B cell (primary cell): ENCODE measurements at regions of chr14 and their contacts with region 1.

Region 1: GRCh38 chr14:24080888-24081738 is 9.8 kb downstream of the CPNE6 start:
- DNase-seq: peak; percentile 82
- ATAC-seq: peak; percentile 93
- H3K4me3 ChIP-seq: peak overlapping the region; percentile 48 to 78 (median 64)
- H3K4me3 Mint-ChIP-seq: peak overlapping the region; percentile 86
- H3K27ac ChIP-seq: peak overlapping the region; percentile 75 to 77
- H3K27ac Mint-ChIP-seq: peak overlapping the region; percentile 91
- H3K4me1 ChIP-seq: peaks cover 19 to 24% of the 10 kb centered on the region in 2 donors
- H3K4me1 Mint-ChIP-seq: peaks cover 30% of the 10 kb centered on the region
- H3K27me3 ChIP-seq: no peaks in the 10 kb centered on the region
- H3K27me3 Mint-ChIP-seq: no peaks in the 10 kb centered on the region
- CTCF ChIP-seq: no peak

Region 2: GRCh38 chr14:24051789-24052655 is 29.1 kb before region 1 on chr14 and contains the start of gene CARMIL3:
- CTCF ChIA-PET with region 1: interaction called, 37 read pairs
- POLR2A ChIA-PET with region 1: interaction called, 9 read pairs
- intact Hi-C with region 1: loop called (anchors 1 kb)
- DNase-seq: peak; percentile 79
- ATAC-seq: peak; percentile 87
- H3K4me3 ChIP-seq: peak within 1 kb of the TSS; percentile 22 to 81 (median 63)
- H3K4me3 Mint-ChIP-seq: peak within 1 kb of the TSS; percentile 83
- H3K27ac ChIP-seq: peak within 1 kb of the TSS; percentile 34 to 57
- H3K27ac Mint-ChIP-seq: peak within 1 kb of the TSS; percentile 68
- H3K4me1 ChIP-seq: peaks cover 19 to 29% of the 10 kb centered on the region in 2 donors
- H3K4me1 Mint-ChIP-seq: peaks cover 41% of the 10 kb centered on the region
- H3K27me3 ChIP-seq: peaks cover 0 to 31% (median 8%) of the 10 kb centered on the region in 4 experiments
- H3K27me3 Mint-ChIP-seq: peaks cover 7% of the 10 kb centered on the region
- CTCF ChIP-seq: no peak
- total RNA-seq, gene CARMIL3: 1.0 and 1.4 TPM in 2 replicates

Region 3: GRCh38 chr14:24058260-24058950 is 22.7 kb before region 1 on chr14:
- CTCF ChIA-PET with region 1: interaction called, 37 read pairs
- POLR2A ChIA-PET with region 1: interaction called, 5 read pairs
- intact Hi-C with region 1: no loop called
- DNase-seq: no peak
- ATAC-seq: peak; percentile 68
- H3K4me3 ChIP-seq: no peak overlapping the region
- H3K4me3 Mint-ChIP-seq: no peak overlapping the region
- H3K27ac ChIP-seq: no peak overlapping the region
- H3K27ac Mint-ChIP-seq: no peak overlapping the region
- H3K4me1 ChIP-seq: no peaks in the 10 kb centered on the region
- H3K4me1 Mint-ChIP-seq: peaks cover 1% of the 10 kb centered on the region
- H3K27me3 ChIP-seq: peaks cover 0 to 26% (median 5%) of the 10 kb centered on the region in 4 experiments
- H3K27me3 Mint-ChIP-seq: no peaks in the 10 kb centered on the region
- CTCF ChIP-seq: peak; percentile 75

Region 4: GRCh38 chr14:24093901-24094761 is 13.0 kb after region 1 on chr14 and contains the start of gene PCK2:
- CTCF ChIA-PET with region 1: interaction called, 96 read pairs
- POLR2A ChIA-PET with region 1: interaction called, 22 read pairs
- intact Hi-C with region 1: loop called (anchors 1 kb)
- DNase-seq: peak; percentile 81
- ATAC-seq: peak; percentile 66
- H3K4me3 ChIP-seq: peak within 1 kb of the TSS; percentile 62 to 97 (median 89)
- H3K4me3 Mint-ChIP-seq: peak within 1 kb of the TSS; percentile 95
- H3K27ac ChIP-seq: peak within 1 kb of the TSS; percentile 80 to 95
- H3K27ac Mint-ChIP-seq: peak within 1 kb of the TSS; percentile 92
- H3K4me1 ChIP-seq: peaks cover 5 to 35% of the 10 kb centered on the region in 2 donors
- H3K4me1 Mint-ChIP-seq: peaks cover 38% of the 10 kb centered on the region
- H3K27me3 ChIP-seq: no peaks in the 10 kb centered on the region
- H3K27me3 Mint-ChIP-seq: no peaks in the 10 kb centered on the region
- CTCF ChIP-seq: peak; percentile 28
- total RNA-seq, gene PCK2: 34.1 and 40.4 TPM in 2 replicates

Region 5: DNA sequence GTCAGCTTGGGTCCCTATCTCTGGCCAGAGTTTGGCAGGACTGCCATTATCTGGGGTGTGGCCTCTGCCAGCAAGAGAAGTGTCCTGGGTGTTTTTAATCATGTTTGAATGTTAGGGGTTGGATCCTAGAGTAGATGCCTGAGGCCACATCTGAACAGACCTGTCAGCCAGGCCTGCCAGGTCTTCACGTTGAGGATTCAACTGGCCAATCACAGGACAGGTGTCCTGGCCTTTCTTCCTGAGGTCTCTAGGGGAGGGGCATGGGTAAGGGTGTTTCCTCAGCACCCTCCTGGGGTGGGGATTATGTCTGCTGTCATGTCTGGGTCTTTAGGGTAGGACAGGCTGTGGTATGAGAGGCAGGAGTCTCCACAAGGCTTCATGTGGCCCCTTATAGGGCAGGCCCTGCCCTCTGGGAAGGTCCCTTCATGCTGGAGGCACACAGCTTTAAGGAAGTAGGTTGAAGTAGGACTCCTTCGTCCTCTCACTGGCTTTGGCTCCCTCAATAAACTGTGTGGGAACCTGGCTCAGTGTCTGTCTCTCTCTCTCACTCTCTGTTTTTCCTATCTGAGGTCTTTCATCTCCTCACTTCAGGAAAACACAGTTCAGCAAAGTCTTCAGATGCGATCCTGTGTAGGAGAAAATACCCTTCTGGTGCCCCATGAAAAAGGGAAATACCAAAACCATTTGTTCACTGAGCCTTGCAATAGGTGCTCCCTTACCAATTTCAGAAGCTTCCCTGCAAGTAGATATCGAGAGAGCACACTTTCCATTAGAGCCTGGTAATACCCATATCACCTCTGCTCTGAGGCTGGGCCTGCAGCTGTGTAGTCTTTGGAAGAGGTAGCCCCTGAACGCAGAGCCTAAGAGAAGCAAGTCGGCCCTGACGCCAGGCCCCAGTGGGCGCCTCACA is 42.6 kb after region 1 on chr14:
- CTCF ChIA-PET with region 1: no interaction called
- POLR2A ChIA-PET with region 1: no interaction called
- intact Hi-C with region 1: no loop called
- DNase-seq: peak; percentile 71
- ATAC-seq: peak; percentile 56
- H3K4me3 ChIP-seq: no peak overlapping the region
- H3K4me3 Mint-ChIP-seq: peak overlapping the region; percentile 39
- H3K27ac ChIP-seq: peak overlapping the region; percentile 30 to 92
- H3K27ac Mint-ChIP-seq: peak overlapping the region; percentile 91
- H3K4me1 ChIP-seq: peaks cover 33 to 34% of the 10 kb centered on the region in 2 donors
- H3K4me1 Mint-ChIP-seq: peaks cover 33% of the 10 kb centered on the region
- H3K27me3 ChIP-seq: no peaks in the 10 kb centered on the region
- H3K27me3 Mint-ChIP-seq: no peaks in the 10 kb centered on the region
- CTCF ChIP-seq: no peak

Region 6: GRCh38 chr14:24135834-24136542 is 54.9 kb after region 1 on chr14 and contains the start of gene PSME1:
- CTCF ChIA-PET with region 1: no interaction called
- POLR2A ChIA-PET with region 1: interaction called, 4 read pairs
- intact Hi-C with region 1: loop called (anchors 2 kb)
- DNase-seq: peak; percentile 96
- ATAC-seq: peak; percentile 97
- H3K4me3 ChIP-seq: peak within 1 kb of the TSS; percentile 54 to 96 (median 78)
- H3K4me3 Mint-ChIP-seq: peak within 1 kb of the TSS; percentile 92
- H3K27ac ChIP-seq: peak within 1 kb of the TSS; percentile 87 to 97
- H3K27ac Mint-ChIP-seq: peak within 1 kb of the TSS; percentile 94
- H3K4me1 ChIP-seq: peaks cover 33 to 43% of the 10 kb centered on the region in 2 donors
- H3K4me1 Mint-ChIP-seq: peaks cover 57% of the 10 kb centered on the region
- H3K27me3 ChIP-seq: no peaks in the 10 kb centered on the region
- H3K27me3 Mint-ChIP-seq: no peaks in the 10 kb centered on the region
- CTCF ChIP-seq: no peak
- total RNA-seq, gene PSME1: 227 and 237 TPM in 2 replicates